ENCODE measurements at regions of chr2 and their contacts with region 1.

Region 1: GRCh38 chr2:236352761-236353593 is 88.8 kb upstream of the ASB18 start:
- ATAC-seq: peak in 3 of 8 experiments; percentile 34 to 54 (median 37)
- H3K4me3 ChIP-seq: no peak overlapping the region
- H3K27ac ChIP-seq: no peak overlapping the region
- H3K4me1 ChIP-seq: peaks cover 2 to 6% of the 10 kb centered on the region in 2 donors

Region 2: DNA sequence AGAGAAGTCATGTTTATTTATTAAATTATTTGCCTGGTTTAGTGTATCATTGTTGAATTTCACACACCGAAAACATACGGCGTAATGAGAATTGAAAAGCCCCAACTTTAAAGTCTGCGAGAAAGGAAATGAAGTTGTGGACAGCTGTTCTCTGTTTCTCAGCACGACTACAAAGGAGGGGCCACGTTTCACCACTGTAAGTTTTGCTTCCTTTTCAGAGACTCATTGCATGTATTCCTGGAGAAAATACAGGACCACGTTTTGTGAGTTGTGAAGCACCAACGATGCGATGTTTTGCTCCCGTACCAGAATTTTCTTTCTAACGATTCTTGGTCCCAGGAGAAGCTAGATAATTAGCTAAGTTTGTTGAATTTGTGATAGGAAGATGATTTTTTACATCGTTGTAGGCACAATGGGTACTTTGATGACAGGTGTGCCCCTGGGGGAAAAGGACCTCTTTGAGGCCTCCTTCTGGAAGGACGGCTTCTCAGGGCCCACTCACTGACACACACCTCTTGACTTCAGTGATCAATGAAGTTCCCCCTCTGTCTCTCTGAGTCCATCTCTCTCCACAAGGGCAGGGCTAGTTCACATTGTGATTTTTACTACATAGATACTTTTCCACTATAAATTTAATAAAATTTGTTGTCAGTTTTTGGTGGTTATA is 193.0 kb after region 1 on chr2:
- in situ Hi-C with region 1: loop called in 1 of 9 experiments (anchors 25 kb)
- ATAC-seq: no peak
- H3K4me3 ChIP-seq: no peak overlapping the region
- H3K27ac ChIP-seq: no peak overlapping the region
- H3K4me1 ChIP-seq: peaks cover 2 to 6% of the 10 kb centered on the region in 2 donors

Region 3: GRCh38 chr2:236731878-236732580 is 379.1 kb after region 1 on chr2:
- in situ Hi-C with region 1: loop called in 1 of 9 experiments (anchors 25 kb)
- ATAC-seq: peak in 6 of 8 experiments; percentile 50 to 76 (median 58)
- H3K4me3 ChIP-seq: no peak overlapping the region
- H3K27ac ChIP-seq: no peak overlapping the region
- H3K4me1 ChIP-seq: peaks cover 2 to 17% of the 10 kb centered on the region in 2 donors